ENCODE measurements at regions of chr2 and their contacts with region 1.

Region 1: GRCh38 chr2:199979832-199980628 is 24.6 kb downstream of the MAIP1 start:
- DNase-seq: peak; percentile 88
- H3K4me3 Mint-ChIP-seq: no peak overlapping the region
- H3K27ac Mint-ChIP-seq: no peak overlapping the region
- H3K4me1 Mint-ChIP-seq: peaks cover 23% of the 10 kb centered on the region
- H3K27me3 Mint-ChIP-seq: no peaks in the 10 kb centered on the region

Region 2: DNA sequence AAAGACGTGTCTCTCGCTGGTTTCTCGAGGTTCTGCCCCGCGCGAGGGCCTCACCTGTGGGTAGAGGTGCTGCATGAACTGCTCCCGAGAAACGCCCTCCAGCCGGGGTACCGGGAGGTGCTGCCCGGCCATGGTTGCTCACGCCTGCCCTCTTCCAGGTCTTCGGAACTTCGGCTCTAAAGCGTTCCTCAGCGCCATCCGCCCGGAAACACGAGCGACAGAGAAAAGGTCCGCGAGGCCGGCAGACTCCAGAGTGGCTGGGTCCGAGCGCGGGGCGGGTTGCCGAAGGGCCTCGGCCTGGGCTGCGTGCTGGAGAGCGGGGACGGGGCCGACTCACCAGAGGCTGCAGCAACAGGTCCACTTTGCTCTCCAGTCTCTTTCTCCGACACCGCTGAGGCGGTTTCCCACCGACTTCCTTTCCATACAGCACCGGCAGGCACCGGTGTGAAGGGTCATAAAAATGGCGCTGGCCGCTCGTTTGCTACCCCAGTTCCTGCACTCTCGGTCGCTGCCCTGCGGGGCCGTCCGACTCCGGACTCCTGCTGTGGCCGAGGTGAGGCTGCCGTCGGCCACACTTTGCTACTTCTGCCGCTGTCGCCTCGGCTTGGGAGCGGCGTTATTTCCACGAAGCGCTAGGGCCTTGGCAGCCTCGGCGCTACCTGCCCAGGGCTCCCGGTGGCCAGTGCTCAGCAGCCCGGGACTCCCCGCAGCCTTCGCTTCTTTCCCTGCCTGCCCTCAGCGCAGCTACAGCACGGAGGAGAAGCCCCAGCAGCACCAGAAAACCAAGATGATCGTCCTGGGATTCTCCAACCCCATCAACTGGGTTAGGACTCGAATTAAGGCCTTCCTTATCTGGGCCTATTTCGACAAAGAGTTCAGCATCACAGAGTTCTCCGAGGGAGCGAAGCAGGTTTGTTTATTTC is 24.4 kb before region 1 on chr2 and contains the starts of genes MAIP1 and TYW5:
- CTCF ChIA-PET with region 1: no interaction called
- POLR2A ChIA-PET with region 1: no interaction called
- intact Hi-C with region 1: loop called (anchors 1 kb)
- DNase-seq: peak; percentile 84
- H3K4me3 Mint-ChIP-seq: peak within 1 kb of the TSS; percentile 99
- H3K27ac Mint-ChIP-seq: peak within 1 kb of the TSS; percentile 92
- H3K4me1 Mint-ChIP-seq: peaks cover 52% of the 10 kb centered on the region
- H3K27me3 Mint-ChIP-seq: no peaks in the 10 kb centered on the region
- total RNA-seq, gene MAIP1: 26.0 to 29.3 TPM
- total RNA-seq, gene TYW5: 8.9 to 9.8 TPM

Region 3: DNA sequence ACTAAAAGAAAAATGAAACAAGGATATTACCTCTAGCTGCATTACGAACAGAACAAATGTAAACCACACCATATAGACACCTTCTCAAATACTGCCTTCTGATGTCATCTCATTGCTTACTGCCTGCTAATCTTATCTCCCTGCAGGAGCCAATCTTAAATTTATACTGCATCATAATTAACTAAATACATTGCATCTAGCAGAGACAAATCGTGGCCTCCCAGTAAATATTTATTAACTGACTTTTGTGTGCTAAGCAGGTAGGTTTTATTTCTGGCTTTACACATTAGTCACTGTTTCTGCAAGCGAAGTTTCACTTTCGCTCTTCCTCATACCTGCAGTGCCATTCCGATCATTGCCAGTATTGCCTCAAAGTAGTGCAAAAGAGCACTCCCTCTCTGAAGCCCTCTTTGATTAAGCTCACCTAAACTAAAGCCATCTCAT is 394.0 kb after region 1 on chr2:
- CTCF ChIA-PET with region 1: interaction called, 4 read pairs
- POLR2A ChIA-PET with region 1: no interaction called
- intact Hi-C with region 1: loop called (anchors 1 kb)
- DNase-seq: peak; percentile 57
- H3K4me3 Mint-ChIP-seq: peak overlapping the region; percentile 64
- H3K27ac Mint-ChIP-seq: peak overlapping the region; percentile 63
- H3K4me1 Mint-ChIP-seq: peaks cover 40% of the 10 kb centered on the region
- H3K27me3 Mint-ChIP-seq: no peaks in the 10 kb centered on the region

Region 4: GRCh38 chr2:200454927-200455801 is 475.1 kb after region 1 on chr2:
- CTCF ChIA-PET with region 1: interaction called, 7 read pairs
- POLR2A ChIA-PET with region 1: no interaction called
- intact Hi-C with region 1: loop called (anchors 1 kb)
- DNase-seq: peak; percentile 43
- H3K4me3 Mint-ChIP-seq: no peak overlapping the region
- H3K27ac Mint-ChIP-seq: peak overlapping the region; percentile 91
- H3K4me1 Mint-ChIP-seq: peaks cover 32% of the 10 kb centered on the region
- H3K27me3 Mint-ChIP-seq: no peaks in the 10 kb centered on the region

Region 5: DNA sequence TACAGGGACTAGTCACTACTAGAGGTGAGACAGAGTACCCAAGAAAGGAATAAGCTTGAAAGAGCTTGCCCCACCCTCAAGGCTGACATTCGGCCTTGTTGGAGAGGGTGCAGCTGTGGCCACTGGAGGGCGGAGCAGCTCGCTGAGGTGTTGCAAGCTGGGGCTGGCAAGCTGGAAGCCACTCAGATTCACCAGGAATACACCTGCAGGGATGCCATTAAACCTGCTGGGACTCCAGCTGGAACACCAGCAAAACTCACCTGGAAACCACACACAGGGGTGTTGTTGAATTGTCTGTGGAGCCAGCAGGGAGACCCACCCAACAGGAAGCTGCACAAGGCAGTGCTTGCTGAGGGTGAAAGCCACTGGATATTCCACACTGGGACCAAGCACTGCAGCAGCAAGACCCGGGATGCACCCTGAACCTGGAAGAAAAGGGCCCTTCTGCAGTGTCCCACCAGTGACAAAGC is 503.7 kb after region 1 on chr2:
- CTCF ChIA-PET with region 1: interaction called, 49 read pairs
- POLR2A ChIA-PET with region 1: no interaction called
- intact Hi-C with region 1: loop called (anchors 1 kb)
- DNase-seq: peak; percentile 66
- H3K4me3 Mint-ChIP-seq: no peak overlapping the region
- H3K27ac Mint-ChIP-seq: no peak overlapping the region
- H3K4me1 Mint-ChIP-seq: peaks cover 18% of the 10 kb centered on the region
- H3K27me3 Mint-ChIP-seq: no peaks in the 10 kb centered on the region

Measured in activated CD4-positive, alpha-beta memory T cell treated with anti-CD3 and anti-CD28 coated beads for 36 hours (primary cell).